B cell (primary cell): ENCODE measurements at regions of chr15 and their contacts with region 1.

Region 1: GRCh38 chr15:57561041-57561711 is 30.5 kb upstream of the MYZAP start:
- DNase-seq: peak; percentile 83
- ATAC-seq: peak; percentile 85
- H3K4me3 ChIP-seq: peak overlapping the region in 4 of 5 experiments; percentile 6 to 37 (median 32)
- H3K4me3 Mint-ChIP-seq: peak overlapping the region; percentile 76
- H3K27ac ChIP-seq: no peak overlapping the region
- H3K27ac Mint-ChIP-seq: peak overlapping the region; percentile 62
- H3K4me1 ChIP-seq: peaks cover 29 to 31% of the 10 kb centered on the region in 2 donors
- H3K4me1 Mint-ChIP-seq: peaks cover 35% of the 10 kb centered on the region
- H3K27me3 ChIP-seq: no peaks in the 10 kb centered on the region
- H3K27me3 Mint-ChIP-seq: peaks cover 1% of the 10 kb centered on the region
- CTCF ChIP-seq: peak; percentile 94

Region 2: DNA sequence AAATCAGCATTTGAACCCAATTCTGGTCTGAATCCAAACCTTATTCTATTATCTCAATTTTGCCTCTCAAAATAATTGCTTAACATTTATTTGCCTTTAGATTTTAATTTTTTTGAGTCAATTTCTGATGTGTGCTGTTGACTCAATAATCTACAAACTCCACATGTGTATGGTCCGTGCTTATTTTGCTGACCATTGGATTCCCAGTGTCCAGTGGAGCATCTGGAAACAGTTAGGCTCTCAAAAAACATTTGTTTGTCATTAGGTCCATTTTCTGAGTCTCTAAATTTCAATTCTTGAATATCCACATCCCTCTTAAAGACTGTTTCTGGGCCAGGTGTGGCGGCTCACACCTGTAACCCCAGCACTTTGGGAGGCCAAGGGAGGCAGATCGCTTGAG is 11.3 kb after region 1 on chr15:
- CTCF ChIA-PET with region 1: interaction called, 10 read pairs
- POLR2A ChIA-PET with region 1: no interaction called
- intact Hi-C with region 1: no loop called
- DNase-seq: no peak
- ATAC-seq: no peak
- H3K4me3 ChIP-seq: no peak overlapping the region
- H3K4me3 Mint-ChIP-seq: no peak overlapping the region
- H3K27ac ChIP-seq: no peak overlapping the region
- H3K27ac Mint-ChIP-seq: no peak overlapping the region
- H3K4me1 ChIP-seq: peaks cover 10% of the 10 kb centered on the region in 2 donors
- H3K4me1 Mint-ChIP-seq: peaks cover 13% of the 10 kb centered on the region
- H3K27me3 ChIP-seq: no peaks in the 10 kb centered on the region
- H3K27me3 Mint-ChIP-seq: peaks cover 3% of the 10 kb centered on the region
- CTCF ChIP-seq: no peak

Region 3: DNA sequence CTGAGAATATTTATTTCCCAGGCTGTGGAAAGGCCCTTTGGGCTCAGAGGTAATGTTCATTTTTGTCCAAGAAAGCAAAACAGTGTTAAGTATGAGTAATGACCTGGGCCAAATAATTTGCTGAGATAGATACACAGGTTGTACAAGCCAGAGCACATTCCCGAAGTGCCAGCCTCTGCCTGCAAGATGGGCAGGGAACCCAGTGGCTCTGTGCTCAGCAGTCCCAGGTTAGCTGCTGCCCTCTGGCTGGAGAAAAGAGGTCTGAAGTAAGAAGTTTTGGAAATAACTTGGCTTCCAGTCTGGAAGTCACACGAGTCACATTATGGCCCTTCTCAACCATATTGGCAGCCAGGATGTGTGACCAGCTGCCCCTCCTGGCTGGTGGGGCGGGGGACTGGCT is 50.8 kb after region 1 on chr15:
- CTCF ChIA-PET with region 1: interaction called, 27 read pairs
- POLR2A ChIA-PET with region 1: no interaction called
- intact Hi-C with region 1: loop called (anchors 1 kb)
- DNase-seq: peak; percentile 38
- ATAC-seq: no peak
- H3K4me3 ChIP-seq: no peak overlapping the region
- H3K4me3 Mint-ChIP-seq: no peak overlapping the region
- H3K27ac ChIP-seq: no peak overlapping the region
- H3K27ac Mint-ChIP-seq: no peak overlapping the region
- H3K4me1 ChIP-seq: no peaks in the 10 kb centered on the region
- H3K4me1 Mint-ChIP-seq: no peaks in the 10 kb centered on the region
- H3K27me3 ChIP-seq: peaks cover 0 to under 1% (median 0%) of the 10 kb centered on the region in 4 experiments
- H3K27me3 Mint-ChIP-seq: peaks cover 6% of the 10 kb centered on the region
- CTCF ChIP-seq: no peak

Region 4: GRCh38 chr15:57640935-57641682 is 79.9 kb after region 1 on chr15:
- CTCF ChIA-PET with region 1: interaction called, 29 read pairs
- POLR2A ChIA-PET with region 1: no interaction called
- intact Hi-C with region 1: loop called (anchors 1 kb)
- DNase-seq: peak; percentile 27
- ATAC-seq: peak; percentile 36
- H3K4me3 ChIP-seq: no peak overlapping the region
- H3K4me3 Mint-ChIP-seq: no peak overlapping the region
- H3K27ac ChIP-seq: no peak overlapping the region
- H3K27ac Mint-ChIP-seq: peak overlapping the region; percentile 21
- H3K4me1 ChIP-seq: peaks cover 0 to 3% of the 10 kb centered on the region in 2 donors
- H3K4me1 Mint-ChIP-seq: no peaks in the 10 kb centered on the region
- H3K27me3 ChIP-seq: no peaks in the 10 kb centered on the region
- H3K27me3 Mint-ChIP-seq: peaks cover 5% of the 10 kb centered on the region
- CTCF ChIP-seq: peak; percentile 43

Region 5: GRCh38 chr15:57706405-57707209 is 145.4 kb after region 1 on chr15 and contains the start of gene POLR2M:
- CTCF ChIA-PET with region 1: interaction called, 7 read pairs
- POLR2A ChIA-PET with region 1: no interaction called
- intact Hi-C with region 1: loop called (anchors 2 kb)
- DNase-seq: peak; percentile 95
- ATAC-seq: peak; percentile 89
- H3K4me3 ChIP-seq: peak within 1 kb of the TSS; percentile 86 to 95 (median 88)
- H3K4me3 Mint-ChIP-seq: peak within 1 kb of the TSS; percentile 88
- H3K27ac ChIP-seq: peak within 1 kb of the TSS; percentile 86 to 95
- H3K27ac Mint-ChIP-seq: peak within 1 kb of the TSS; percentile 85
- H3K4me1 ChIP-seq: peaks cover 17 to 20% of the 10 kb centered on the region in 2 donors
- H3K4me1 Mint-ChIP-seq: peaks cover 45% of the 10 kb centered on the region
- H3K27me3 ChIP-seq: no peaks in the 10 kb centered on the region
- H3K27me3 Mint-ChIP-seq: peaks cover 14% of the 10 kb centered on the region
- CTCF ChIP-seq: no peak
- total RNA-seq, gene POLR2M: 67.4 and 73.2 TPM in 2 replicates